Kidney (tissue), 22 donors: ENCODE measurements at regions of chr9 and their contacts with region 1.

Region 1: DNA sequence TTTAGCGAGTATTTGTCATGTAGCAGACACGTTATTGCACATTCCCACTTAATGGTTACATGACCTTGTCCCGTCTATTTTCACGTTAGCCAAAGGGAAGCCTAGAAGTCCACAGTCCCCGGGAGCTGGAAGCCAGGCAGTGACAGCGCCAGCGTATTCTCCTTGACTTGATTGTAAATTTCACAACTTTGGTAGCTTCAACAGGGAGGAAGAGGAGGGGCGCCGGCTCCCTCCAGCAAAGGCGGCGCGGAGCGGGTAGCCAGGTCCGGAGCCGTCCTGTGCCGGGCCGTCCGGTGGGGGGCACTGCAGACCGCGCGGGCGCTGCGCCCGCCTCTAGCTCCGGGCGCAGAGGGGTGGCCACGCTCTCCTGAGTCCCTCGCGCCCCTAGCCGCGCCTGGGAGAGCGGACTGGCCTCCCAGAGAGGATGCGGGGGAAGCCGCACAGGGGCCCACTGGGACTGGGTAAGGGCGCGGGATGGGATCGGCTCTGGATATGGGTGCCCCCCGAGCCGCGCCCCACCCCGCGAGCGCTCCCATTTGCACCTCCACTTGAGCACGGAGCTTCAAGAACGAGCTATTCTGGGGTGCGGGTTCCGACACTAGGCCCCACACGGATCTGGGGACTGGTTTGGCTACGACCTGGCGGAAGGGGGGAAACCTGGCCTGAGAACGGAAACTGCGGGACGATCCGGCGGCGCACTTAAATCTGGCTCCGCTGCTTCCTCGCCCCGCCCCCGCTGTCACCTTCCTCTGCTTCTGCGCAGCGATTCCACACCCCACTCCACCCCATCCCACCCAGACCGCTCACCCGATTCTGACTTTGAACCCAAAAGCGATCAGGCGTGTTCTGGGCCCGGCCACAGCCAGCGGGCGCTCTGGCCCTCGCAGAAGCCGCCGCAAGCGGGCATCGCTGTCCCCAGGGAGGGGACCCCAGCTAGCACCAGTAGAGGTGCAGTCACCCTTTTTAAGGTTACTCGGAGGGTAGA is 23.8 kb downstream of the KLF4 start:
- DNase-seq: peak; percentile 76 to 81 (median 79)
- H3K4me3 ChIP-seq: peak overlapping the region; percentile 36 to 61 (median 48)
- H3K27ac ChIP-seq: no peak overlapping the region
- H3K4me1 ChIP-seq: peaks cover 0 to 6% (median 0%) of the 10 kb centered on the region in 3 donors
- H3K27me3 ChIP-seq: peaks cover 2% of the 10 kb centered on the region
- CTCF ChIP-seq: peak; percentile 74

Region 2: DNA sequence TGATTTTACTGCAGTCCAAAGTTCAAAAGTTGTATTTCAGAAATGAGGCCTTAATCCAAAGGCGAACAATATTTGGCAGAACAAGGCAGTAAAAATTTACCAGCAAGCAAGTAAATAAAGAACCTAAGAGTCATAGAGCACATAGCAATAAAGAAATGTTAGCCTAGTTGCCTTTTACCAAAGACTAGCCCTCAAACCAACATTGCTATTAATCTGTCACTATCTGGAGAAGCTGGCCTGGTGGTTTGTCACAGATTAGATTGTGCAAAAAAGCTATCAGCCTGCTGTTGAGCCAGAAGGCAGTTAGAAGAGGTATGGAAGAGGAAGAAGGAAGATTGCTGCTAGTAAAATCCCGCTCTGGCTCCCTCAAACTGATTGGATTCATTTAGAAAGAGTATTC is 328.5 kb after region 1 on chr9:
- intact Hi-C with region 1: no loop called
- DNase-seq: no peak
- H3K4me3 ChIP-seq: no peak overlapping the region
- H3K27ac ChIP-seq: no peak overlapping the region
- H3K4me1 ChIP-seq: no peaks in the 10 kb centered on the region
- H3K27me3 ChIP-seq: no peaks in the 10 kb centered on the region
- CTCF ChIP-seq: no peak

Region 3: DNA sequence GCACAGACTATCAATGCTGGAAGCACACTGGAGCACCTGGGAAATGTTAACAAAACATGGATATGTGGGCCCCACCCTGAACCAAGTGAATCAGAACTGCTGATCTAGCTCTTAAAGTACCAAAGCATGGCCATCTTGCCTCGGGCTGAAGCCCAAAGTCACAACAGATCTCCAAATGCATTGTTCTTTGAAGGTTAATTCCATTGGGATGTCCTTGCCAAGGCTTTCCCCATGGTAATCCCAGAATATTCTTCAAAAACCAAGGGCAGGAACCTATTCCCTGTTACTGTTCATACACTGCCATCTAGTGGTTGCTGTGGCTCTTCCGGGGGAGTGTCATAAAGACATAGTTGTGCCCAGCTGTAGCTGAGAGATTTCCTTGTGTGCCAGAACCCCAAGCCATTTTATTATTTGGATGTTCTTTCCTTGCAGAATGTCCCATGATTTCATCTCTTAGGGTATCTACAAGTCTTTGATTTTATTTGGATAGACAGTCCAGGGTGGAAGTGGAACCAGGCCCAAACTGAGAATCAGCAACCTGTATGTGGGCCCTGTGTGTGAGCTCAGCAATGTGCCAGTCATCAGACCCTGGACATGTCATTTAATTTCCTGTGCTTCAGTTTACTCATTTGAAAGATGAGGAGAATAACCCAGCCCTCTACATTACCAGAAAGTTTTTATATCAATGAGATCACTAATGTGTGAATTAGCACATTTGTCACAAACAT is 1100.1 kb after region 1 on chr9:
- intact Hi-C with region 1: loop called (anchors 5 kb)
- DNase-seq: peak in 4 of 5 donors; percentile 59 to 95 (median 75)
- H3K4me3 ChIP-seq: no peak overlapping the region
- H3K27ac ChIP-seq: no peak overlapping the region
- H3K4me1 ChIP-seq: no peaks in the 10 kb centered on the region
- H3K27me3 ChIP-seq: no peaks in the 10 kb centered on the region
- CTCF ChIP-seq: peak; percentile 86